OCI-LY7 (cell line): ENCODE measurements at regions of chr14 and their contacts with region 1.

Region 1: GRCh38 chr14:102008891-102009290 is 44.5 kb downstream of the DYNC1H1 start:
- DNase-seq: no peak
- H3K4me3 ChIP-seq: no peak overlapping the region
- H3K27ac ChIP-seq: no peak overlapping the region
- H3K4me1 ChIP-seq: no peaks in the 10 kb centered on the region
- CTCF ChIP-seq: no peak

Region 2: GRCh38 chr14:101564819-101565698 is 443.8 kb before region 1 on chr14:
- CTCF ChIA-PET with region 1: no interaction called
- POLR2A ChIA-PET with region 1: no interaction called
- intact Hi-C with region 1: no loop called
- DNase-seq: no peak
- H3K4me3 ChIP-seq: no peak overlapping the region
- H3K27ac ChIP-seq: no peak overlapping the region
- H3K4me1 ChIP-seq: peaks cover 18% of the 10 kb centered on the region
- CTCF ChIP-seq: 0 out of 2 replicates have a peak, but pooled peaks have one; percentile 16

Region 3: GRCh38 chr14:101915871-101916815 is 92.7 kb before region 1 on chr14:
- CTCF ChIA-PET with region 1: no interaction called
- POLR2A ChIA-PET with region 1: no interaction called
- intact Hi-C with region 1: no loop called
- DNase-seq: no peak
- H3K4me3 ChIP-seq: no peak overlapping the region
- H3K27ac ChIP-seq: no peak overlapping the region
- H3K4me1 ChIP-seq: no peaks in the 10 kb centered on the region
- CTCF ChIP-seq: no peak

Region 4: DNA sequence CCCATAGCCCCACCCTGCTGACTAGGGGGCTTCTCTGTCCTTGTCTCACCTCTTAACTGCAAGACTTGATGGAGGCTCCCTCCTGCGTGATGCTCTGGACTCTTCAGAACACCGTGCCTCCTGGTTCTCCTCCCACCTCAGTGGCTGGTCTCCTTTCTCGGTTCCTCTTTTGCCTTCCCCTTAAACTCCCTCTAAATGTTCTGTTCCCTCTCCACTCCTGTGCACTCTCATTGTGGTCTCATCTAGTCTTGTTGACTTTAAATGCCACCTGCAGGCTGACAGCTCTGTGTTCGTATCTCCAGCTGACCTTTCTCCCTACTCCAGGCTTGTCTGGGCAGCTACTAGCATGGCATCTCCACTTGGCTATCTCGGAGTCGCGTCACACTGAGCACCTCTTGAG is 16.2 kb before region 1 on chr14:
- CTCF ChIA-PET with region 1: no interaction called
- POLR2A ChIA-PET with region 1: no interaction called
- intact Hi-C with region 1: loop called (anchors 2 kb)
- DNase-seq: peak; percentile 82
- H3K4me3 ChIP-seq: no peak overlapping the region
- H3K27ac ChIP-seq: peak overlapping the region; percentile 45
- H3K4me1 ChIP-seq: peaks cover 21% of the 10 kb centered on the region
- CTCF ChIP-seq: peak; percentile 62

Region 5: DNA sequence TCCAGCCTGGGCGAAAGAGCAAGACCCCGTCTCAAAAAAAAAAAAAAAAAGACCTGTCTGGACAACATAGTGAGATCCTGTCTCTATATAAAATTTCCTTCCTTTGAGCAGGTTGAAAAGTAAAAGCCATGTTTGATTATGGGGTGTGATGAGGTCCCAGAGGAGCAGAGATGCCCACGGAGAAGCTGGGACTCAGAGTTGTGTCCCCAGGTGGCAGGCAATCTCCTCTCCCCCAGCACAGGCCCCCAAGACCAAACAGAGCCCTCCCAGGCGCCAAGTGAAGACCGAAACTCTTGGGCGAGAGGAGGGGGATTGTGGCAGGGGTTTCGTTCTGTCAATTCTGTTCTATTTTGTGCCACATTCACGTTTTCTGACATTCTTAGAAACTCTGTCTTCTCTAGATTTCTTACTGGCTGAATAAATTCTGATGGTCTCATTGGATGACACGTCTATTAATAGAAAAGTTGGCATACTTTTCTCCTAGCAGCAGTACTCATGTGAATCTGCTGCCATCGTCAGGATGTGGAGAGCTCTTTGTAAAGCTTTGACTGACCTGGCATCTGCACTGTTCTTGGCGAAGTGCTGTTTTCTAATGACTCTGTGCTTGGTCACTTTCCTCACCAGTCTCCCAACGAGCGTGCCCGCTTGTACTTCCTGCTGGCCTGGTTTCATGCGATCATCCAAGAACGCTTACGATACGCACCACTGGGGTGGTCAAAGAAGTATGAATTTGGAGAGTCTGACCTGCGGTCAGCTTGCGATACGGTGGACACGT is 34.5 kb after region 1 on chr14:
- CTCF ChIA-PET with region 1: no interaction called
- POLR2A ChIA-PET with region 1: no interaction called
- intact Hi-C with region 1: loop called (anchors 5 kb)
- DNase-seq: no peak
- H3K4me3 ChIP-seq: no peak overlapping the region
- H3K27ac ChIP-seq: no peak overlapping the region
- H3K4me1 ChIP-seq: no peaks in the 10 kb centered on the region
- CTCF ChIP-seq: no peak